Activated CD8-positive, alpha-beta T cell treated with anti-CD3 and anti-CD28 coated beads, Interleukin-2, amount 10 ng/mL, durations not matched to agents 7 days and 5 days (primary cell): ENCODE measurements at regions of chr20 and their contacts with region 1.

Region 1: GRCh38 chr20:3767427-3768341 is at the start of gene ADISSP:
- DNase-seq: peak; percentile 99
- ATAC-seq: peak; percentile 95
- H3K4me3 Mint-ChIP-seq: peak within 1 kb of the TSS; percentile 89
- H3K27ac Mint-ChIP-seq: peak within 1 kb of the TSS; percentile 94
- H3K4me1 Mint-ChIP-seq: peaks cover 30% of the 10 kb centered on the region
- H3K27me3 Mint-ChIP-seq: no peaks in the 10 kb centered on the region
- total RNA-seq, gene ADISSP: 37.4 to 38.5 TPM

Region 2: DNA sequence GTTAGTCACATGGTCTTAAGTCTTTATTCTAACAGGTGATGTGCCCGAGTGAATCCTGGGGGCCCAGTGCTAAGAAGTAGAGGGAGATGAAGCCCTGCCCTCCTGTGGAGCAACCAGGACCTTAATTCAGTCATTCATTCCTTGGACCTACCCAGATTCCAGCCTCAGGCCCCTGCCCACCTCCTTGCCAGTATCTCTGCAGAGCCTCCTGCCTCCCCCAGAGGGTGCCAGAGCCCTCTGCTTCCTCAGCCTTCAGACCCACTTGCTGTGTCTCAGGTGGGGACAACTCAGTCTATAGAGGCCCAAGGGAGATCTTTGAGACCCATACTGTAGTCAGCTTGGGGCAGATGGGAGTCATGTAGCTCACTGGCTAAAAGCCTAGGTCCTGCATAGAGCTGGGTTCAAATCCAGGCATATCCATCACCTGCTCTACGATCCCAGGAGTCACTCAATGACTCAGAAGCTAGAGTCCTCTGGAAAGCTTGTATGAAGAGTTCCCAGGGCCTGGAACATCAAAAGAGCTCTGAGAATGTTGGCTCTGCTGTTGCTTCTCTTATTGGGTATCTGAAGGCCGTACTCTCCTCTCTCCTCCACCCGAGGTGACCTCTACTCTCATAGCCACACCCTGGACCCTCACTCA is 51.4 kb before region 1 on chr20:
- CTCF ChIA-PET with region 1: interaction called, 14 read pairs
- POLR2A ChIA-PET with region 1: no interaction called
- DNase-seq: peak; percentile 50
- ATAC-seq: peak; percentile 74
- H3K4me3 Mint-ChIP-seq: no peak overlapping the region
- H3K27ac Mint-ChIP-seq: no peak overlapping the region
- H3K4me1 Mint-ChIP-seq: peaks cover 11% of the 10 kb centered on the region
- H3K27me3 Mint-ChIP-seq: peaks cover 12% of the 10 kb centered on the region

Region 3: DNA sequence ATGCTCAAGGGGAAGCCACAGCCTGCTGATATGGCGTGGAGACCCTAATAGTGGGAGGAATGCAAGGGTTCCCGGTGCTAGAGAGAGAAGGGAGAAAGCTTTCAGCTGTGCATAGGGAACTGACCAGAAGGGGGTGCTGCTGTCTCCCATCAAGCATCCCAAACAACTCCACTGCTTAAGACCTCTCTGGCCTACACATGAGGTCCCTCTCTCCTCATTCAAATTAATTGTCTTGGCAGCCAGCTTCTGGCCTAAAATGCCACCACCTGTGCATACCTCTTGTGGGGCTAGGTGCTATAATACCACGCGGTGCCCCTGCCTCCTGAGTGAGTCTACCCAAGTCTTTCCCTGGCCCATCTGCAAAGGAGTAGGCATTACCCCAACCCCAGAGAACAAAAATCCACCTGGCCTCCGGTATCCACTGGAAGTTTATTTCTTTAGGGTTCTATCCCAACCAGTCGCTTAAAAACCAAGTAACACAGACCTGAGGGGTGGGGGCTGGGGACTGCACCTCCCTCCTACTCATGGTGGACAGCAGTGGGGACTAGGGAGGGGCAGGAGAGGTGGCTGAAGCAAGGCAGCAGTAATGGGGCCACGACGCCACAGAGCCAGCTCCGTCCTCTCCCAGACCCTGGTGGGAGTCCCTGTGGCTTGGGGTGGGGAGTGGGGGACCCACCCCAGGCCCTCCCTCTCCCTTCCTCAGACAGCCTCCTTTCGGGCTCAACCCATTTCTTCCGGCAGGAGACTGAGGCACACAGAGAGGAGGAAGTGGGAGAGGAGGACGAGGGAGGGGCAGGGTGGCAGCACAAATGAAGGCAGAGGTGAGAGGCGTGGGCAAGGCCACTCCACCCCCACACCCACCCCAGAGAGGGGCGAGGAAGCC is 14.3 kb before region 1 on chr20:
- CTCF ChIA-PET with region 1: interaction called, 33 read pairs
- POLR2A ChIA-PET with region 1: interaction called, 5 read pairs
- DNase-seq: peak; percentile 72
- ATAC-seq: peak; percentile 71
- H3K4me3 Mint-ChIP-seq: no peak overlapping the region
- H3K27ac Mint-ChIP-seq: no peak overlapping the region
- H3K4me1 Mint-ChIP-seq: peaks cover 4% of the 10 kb centered on the region
- H3K27me3 Mint-ChIP-seq: no peaks in the 10 kb centered on the region

Region 4: GRCh38 chr20:3781153-3781910 is 13.6 kb after region 1 on chr20 and contains the start of gene SPEF1:
- CTCF ChIA-PET with region 1: interaction called, 19 read pairs
- POLR2A ChIA-PET with region 1: interaction called, 15 read pairs
- DNase-seq: peak; percentile 61
- ATAC-seq: peak; percentile 32
- H3K4me3 Mint-ChIP-seq: no peak within 1 kb of the TSS
- H3K27ac Mint-ChIP-seq: no peak within 1 kb of the TSS
- H3K4me1 Mint-ChIP-seq: peaks cover 50% of the 10 kb centered on the region
- H3K27me3 Mint-ChIP-seq: peaks cover 23% of the 10 kb centered on the region
- total RNA-seq, gene SPEF1: 0.16 TPM

Region 5: DNA sequence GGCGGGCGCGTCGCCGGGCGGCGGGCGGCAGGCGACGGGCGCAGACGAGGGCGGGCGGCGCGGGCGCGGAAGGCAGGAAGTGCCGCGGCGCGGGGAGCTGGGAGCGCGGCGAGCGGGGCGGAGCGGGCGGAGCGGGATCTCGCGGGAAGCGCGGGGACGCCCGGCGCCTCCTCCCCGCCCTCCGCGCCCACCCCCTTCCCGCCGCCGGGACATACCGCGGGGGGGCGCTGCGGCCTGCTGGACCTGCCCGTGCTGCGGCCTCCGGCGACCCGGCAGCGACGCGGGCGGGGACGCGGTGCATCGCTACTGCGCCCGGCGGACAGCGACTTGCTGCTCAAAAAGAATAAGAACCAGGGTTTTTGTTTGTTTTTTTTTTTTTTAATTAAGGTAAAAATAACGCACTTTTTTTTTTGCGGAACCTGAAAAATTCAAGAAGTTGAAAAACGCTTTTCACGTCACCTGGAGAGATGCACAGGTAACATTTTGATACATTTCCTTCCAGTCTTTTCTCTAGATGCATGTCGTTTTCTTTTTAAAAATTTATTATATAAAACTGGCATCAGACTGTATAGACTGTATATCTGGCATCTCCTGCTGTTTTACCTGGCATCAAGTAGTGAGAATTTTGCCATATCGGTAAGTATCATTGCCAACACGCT is 19.1 kb after region 1 on chr20 and contains the start of gene CENPB:
- CTCF ChIA-PET with region 1: interaction called, 18 read pairs
- POLR2A ChIA-PET with region 1: interaction called, 15 read pairs
- DNase-seq: peak; percentile 91
- ATAC-seq: peak; percentile 94
- H3K4me3 Mint-ChIP-seq: peak within 1 kb of the TSS; percentile 81
- H3K27ac Mint-ChIP-seq: peak within 1 kb of the TSS; percentile 85
- H3K4me1 Mint-ChIP-seq: peaks cover 45% of the 10 kb centered on the region
- H3K27me3 Mint-ChIP-seq: no peaks in the 10 kb centered on the region
- total RNA-seq, gene CENPB: 87.1 to 92.0 TPM